ENCODE measurements at regions of chr7 and their contacts with region 1.

Region 1: DNA sequence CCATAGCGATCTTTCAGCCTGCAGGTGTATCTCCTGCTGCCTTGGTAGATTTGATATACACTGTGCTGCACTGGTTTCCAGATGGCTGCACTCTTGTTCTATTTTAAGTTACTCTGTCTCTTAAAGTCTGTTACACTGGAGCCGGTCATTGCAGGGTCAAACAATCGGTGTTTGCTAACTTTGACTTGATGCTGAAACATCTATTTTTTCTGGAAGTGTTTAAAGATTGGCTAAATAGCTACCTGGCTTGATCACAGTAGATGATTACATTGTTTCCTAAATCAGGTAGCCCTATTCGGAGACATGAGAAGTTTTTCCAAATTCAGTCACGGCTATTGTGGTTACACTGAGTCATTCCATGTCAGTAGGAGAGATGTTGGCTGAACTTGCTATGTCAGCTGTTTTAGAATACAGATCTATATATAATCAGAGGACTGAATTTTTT is 574.8 kb downstream of the ETV1 start:
- DNase-seq: peak; percentile 92
- ATAC-seq: peak; percentile 97
- H3K4me3 ChIP-seq: peak overlapping the region; percentile 2; the same call in 1 of the 2 replicates
- H3K27ac ChIP-seq: 0 out of 2 replicates have a peak overlapping the region, but pooled peaks have one; percentile 4
- H3K4me1 ChIP-seq: peaks cover 17% of the 10 kb centered on the region
- H3K27me3 ChIP-seq: no peaks in the 10 kb centered on the region
- CTCF ChIP-seq: no peak

Region 2: DNA sequence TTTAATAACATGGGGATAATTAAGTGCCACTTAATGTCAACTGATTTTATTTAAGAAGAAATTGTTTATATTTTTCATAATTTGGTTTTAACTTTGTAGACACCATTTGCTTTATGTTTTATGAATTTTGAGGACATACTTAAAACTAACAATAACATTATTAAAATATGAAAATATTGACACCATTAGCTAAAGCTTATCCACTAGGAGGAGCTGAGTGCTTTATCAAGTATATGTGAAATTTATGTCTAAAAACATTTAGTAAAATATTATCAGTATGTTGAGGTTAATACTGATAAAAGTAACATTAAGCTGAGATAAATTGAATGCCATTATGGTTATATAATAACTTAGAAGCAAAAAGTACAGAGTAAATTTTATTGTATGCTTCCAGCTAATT is 105.1 kb before region 1 on chr7:
- CTCF ChIA-PET with region 1: no interaction called
- POLR2A ChIA-PET with region 1: no interaction called
- intact Hi-C with region 1: loop called (anchors 5 kb)
- DNase-seq: no peak
- ATAC-seq: no peak
- H3K4me3 ChIP-seq: no peak overlapping the region
- H3K27ac ChIP-seq: no peak overlapping the region
- H3K4me1 ChIP-seq: no peaks in the 10 kb centered on the region
- H3K27me3 ChIP-seq: no peaks in the 10 kb centered on the region
- CTCF ChIP-seq: peak; percentile 38

Region 3: GRCh38 chr7:13442226-13442625 is 27.5 kb after region 1 on chr7:
- CTCF ChIA-PET with region 1: no interaction called
- POLR2A ChIA-PET with region 1: no interaction called
- intact Hi-C with region 1: no loop called
- DNase-seq: no peak
- ATAC-seq: no peak
- H3K4me3 ChIP-seq: no peak overlapping the region
- H3K27ac ChIP-seq: no peak overlapping the region
- H3K4me1 ChIP-seq: no peaks in the 10 kb centered on the region
- H3K27me3 ChIP-seq: no peaks in the 10 kb centered on the region
- CTCF ChIP-seq: no peak

Measured in PC-3 (cell line).